ENCODE measurements at regions of chr17 and their contacts with region 1.

Region 1: GRCh38 chr17:32997753-32998632 is 6.3 kb downstream of the SPACA3 start:
- DNase-seq: peak; percentile 61
- H3K4me3 ChIP-seq: peak overlapping the region in 2 of 3 experiments; percentile 6 to 10
- H3K27ac ChIP-seq: no peak overlapping the region
- H3K4me1 ChIP-seq: peaks cover 8% of the 10 kb centered on the region
- H3K27me3 ChIP-seq: no peaks in the 10 kb centered on the region
- CTCF ChIP-seq: peak; percentile 90

Region 2: GRCh38 chr17:32769839-32770238 is 228.2 kb before region 1 on chr17:
- CTCF ChIA-PET with region 1: no interaction called
- dilution Hi-C with region 1: no loop called
- in situ Hi-C with region 1: no loop called
- intact Hi-C with region 1: loop called (anchors 2 kb)
- DNase-seq: peak; percentile 40
- H3K4me3 ChIP-seq: no peak overlapping the region
- H3K27ac ChIP-seq: no peak overlapping the region
- H3K4me1 ChIP-seq: no peaks in the 10 kb centered on the region
- H3K27me3 ChIP-seq: no peaks in the 10 kb centered on the region
- CTCF ChIP-seq: peak; percentile 18 to 49

Region 3: GRCh38 chr17:32783602-32784001 is 214.4 kb before region 1 on chr17:
- CTCF ChIA-PET with region 1: no interaction called
- dilution Hi-C with region 1: no loop called
- in situ Hi-C with region 1: loop called in 1 of 2 experiments (anchors 10 kb)
- intact Hi-C with region 1: loop called (anchors 1 kb)
- DNase-seq: peak; percentile 43
- H3K4me3 ChIP-seq: no peak overlapping the region
- H3K27ac ChIP-seq: no peak overlapping the region
- H3K4me1 ChIP-seq: no peaks in the 10 kb centered on the region
- H3K27me3 ChIP-seq: no peaks in the 10 kb centered on the region
- CTCF ChIP-seq: peak; percentile 56 to 63

Region 4: GRCh38 chr17:32909787-32910369 is 88.1 kb before region 1 on chr17:
- CTCF ChIA-PET with region 1: no interaction called
- dilution Hi-C with region 1: no loop called
- in situ Hi-C with region 1: no loop called
- intact Hi-C with region 1: loop called (anchors 1 kb)
- DNase-seq: peak; percentile 69
- H3K4me3 ChIP-seq: no peak overlapping the region
- H3K27ac ChIP-seq: no peak overlapping the region
- H3K4me1 ChIP-seq: no peaks in the 10 kb centered on the region
- H3K27me3 ChIP-seq: no peaks in the 10 kb centered on the region
- CTCF ChIP-seq: peak; percentile 87 to 88

Region 5: DNA sequence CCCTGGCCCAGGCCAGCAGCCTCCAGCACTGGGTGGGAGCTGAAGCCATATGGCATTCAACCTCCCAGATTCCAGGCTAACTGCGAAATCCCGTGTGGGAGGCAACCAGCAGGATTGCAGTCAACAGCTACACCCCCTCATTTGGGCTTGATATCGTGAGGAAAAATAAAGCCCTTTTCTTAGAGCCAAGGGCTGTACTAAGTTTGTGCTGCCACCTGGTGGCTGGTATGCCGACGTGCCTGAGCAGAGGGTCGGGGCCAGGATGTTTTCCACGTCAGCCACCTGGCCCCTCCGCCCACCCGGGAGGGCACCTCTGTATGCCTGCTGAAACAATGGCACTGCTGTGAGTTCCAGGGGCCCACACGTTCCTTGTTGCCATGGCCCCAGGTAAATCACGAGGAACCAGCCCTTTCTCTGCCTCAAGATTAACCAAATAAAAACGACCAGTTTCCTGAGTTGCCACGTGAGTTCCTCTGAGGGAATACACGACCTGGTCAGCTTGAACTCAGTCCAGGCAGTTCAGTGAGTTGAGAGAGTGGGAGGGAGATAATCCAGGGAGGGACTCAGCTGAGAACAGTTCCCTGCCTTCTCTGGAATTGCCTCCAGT is 61.0 kb before region 1 on chr17:
- CTCF ChIA-PET with region 1: no interaction called
- dilution Hi-C with region 1: no loop called
- in situ Hi-C with region 1: no loop called
- intact Hi-C with region 1: loop called (anchors 2 kb)
- DNase-seq: peak; percentile 59
- H3K4me3 ChIP-seq: no peak overlapping the region
- H3K27ac ChIP-seq: peak overlapping the region; percentile 43
- H3K4me1 ChIP-seq: peaks cover 17% of the 10 kb centered on the region
- H3K27me3 ChIP-seq: no peaks in the 10 kb centered on the region
- CTCF ChIP-seq: peak; percentile 77 to 81

Region 6: DNA sequence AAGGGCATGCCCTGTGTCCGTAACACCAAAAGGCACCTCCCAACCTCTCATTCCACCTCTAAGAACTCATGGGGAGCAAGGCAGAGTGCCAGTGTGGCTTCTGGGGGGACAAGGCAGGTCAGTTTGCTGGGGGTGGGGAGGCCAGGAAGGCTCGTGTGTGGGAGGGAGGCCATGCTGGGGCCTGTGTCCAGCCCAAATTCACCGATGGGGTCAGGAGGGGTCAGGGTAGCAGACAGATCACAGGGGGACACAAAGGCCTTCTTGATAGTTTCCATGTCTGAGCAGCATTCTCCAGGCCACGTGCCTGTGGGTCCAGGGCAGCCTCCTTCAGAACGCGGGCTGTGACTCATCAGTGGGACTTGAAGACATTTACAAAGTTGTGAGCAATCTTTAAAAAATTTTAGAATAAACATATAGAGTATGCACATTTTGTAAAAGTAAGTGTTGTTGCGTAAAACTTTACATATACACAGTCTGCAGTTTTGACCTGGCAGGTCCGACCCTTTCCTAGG is 14.6 kb after region 1 on chr17:
- CTCF ChIA-PET with region 1: no interaction called
- dilution Hi-C with region 1: no loop called
- in situ Hi-C with region 1: no loop called
- intact Hi-C with region 1: no loop called
- DNase-seq: peak; percentile 83
- H3K4me3 ChIP-seq: no peak overlapping the region
- H3K27ac ChIP-seq: peak overlapping the region; percentile 5
- H3K4me1 ChIP-seq: peaks cover 46% of the 10 kb centered on the region
- H3K27me3 ChIP-seq: no peaks in the 10 kb centered on the region
- CTCF ChIP-seq: no peak

Region 7: DNA sequence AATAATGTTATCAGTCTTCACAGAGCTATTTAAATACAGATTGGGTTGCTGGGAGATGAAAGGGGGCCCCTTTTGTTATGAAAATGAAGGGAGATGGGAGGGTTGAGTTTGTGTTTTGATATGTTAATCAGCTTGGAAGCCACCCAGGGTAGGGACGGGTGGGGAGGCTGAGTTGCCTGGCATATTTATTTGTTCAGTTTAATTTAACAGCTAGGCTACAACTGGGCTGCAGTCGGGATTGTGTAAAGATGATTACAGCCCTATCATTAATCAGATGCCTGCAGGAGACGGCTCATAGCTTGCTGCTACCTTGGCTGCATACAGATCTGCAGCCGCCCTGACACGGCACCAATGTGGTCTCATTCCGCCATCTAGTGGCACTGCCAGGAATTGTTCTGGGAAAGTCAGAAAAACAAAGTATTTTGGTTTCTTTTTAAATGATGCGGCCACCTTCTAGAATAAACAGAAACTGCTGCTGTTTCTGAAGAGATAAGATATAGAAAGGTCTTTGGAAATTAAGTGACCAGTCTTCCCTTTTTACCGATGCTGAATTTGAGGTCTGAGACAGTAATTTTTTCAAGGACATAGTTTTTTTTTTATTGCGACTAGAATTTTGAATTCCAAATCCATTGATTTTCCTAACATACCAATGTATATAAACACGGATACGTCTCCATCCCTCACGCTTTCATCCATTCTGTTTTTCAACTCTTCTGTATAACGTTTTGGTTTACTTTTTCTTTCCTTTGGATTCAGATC is 753.1 kb after region 1 on chr17:
- CTCF ChIA-PET with region 1: no interaction called
- dilution Hi-C with region 1: no loop called
- in situ Hi-C with region 1: no loop called
- intact Hi-C with region 1: loop called (anchors 1 kb)
- DNase-seq: peak; percentile 28
- H3K4me3 ChIP-seq: peak overlapping the region in 2 of 3 experiments; percentile 32 to 33
- H3K27ac ChIP-seq: no peak overlapping the region
- H3K4me1 ChIP-seq: no peaks in the 10 kb centered on the region
- H3K27me3 ChIP-seq: no peaks in the 10 kb centered on the region
- CTCF ChIP-seq: peak; percentile 85 to 89

Measured in mammary epithelial cell (primary cell).